Panc1 (cell line): ENCODE measurements at regions of chr5 and their contacts with region 1.

Region 1: GRCh38 chr5:149990518-149991376 is 9.7 kb downstream of the TIGD6 start:
- DNase-seq: peak; percentile 82
- ATAC-seq: peak; percentile 92
- H3K4me3 ChIP-seq: no peak overlapping the region
- H3K27ac ChIP-seq: peak overlapping the region; percentile 45; the same call in 1 of the 2 replicates
- H3K4me1 ChIP-seq: no peaks in the 10 kb centered on the region; the same call in 1 of the 2 replicates
- H3K27me3 ChIP-seq: no peaks in the 10 kb centered on the region
- CTCF ChIP-seq: peak; percentile 94

Region 2: GRCh38 chr5:149636851-149637246 is 353.9 kb before region 1 on chr5:
- CTCF ChIA-PET with region 1: no interaction called
- POLR2A ChIA-PET with region 1: interaction called, 3 read pairs
- in situ Hi-C with region 1: no loop called
- intact Hi-C with region 1: loop called (anchors 5 kb)
- DNase-seq: peak; percentile 52
- ATAC-seq: peak; percentile 90
- H3K4me3 ChIP-seq: no peak overlapping the region
- H3K27ac ChIP-seq: no peak overlapping the region
- H3K4me1 ChIP-seq: peaks cover 5% of the 10 kb centered on the region
- H3K27me3 ChIP-seq: no peaks in the 10 kb centered on the region
- CTCF ChIP-seq: peak; percentile 91

Region 3: GRCh38 chr5:149834246-149834855 is 156.4 kb before region 1 on chr5:
- CTCF ChIA-PET with region 1: interaction called, 52 read pairs
- POLR2A ChIA-PET with region 1: no interaction called
- in situ Hi-C with region 1: no loop called
- intact Hi-C with region 1: loop called (anchors 1 kb)
- DNase-seq: peak; percentile 69
- ATAC-seq: peak; percentile 77
- H3K4me3 ChIP-seq: no peak overlapping the region
- H3K27ac ChIP-seq: no peak overlapping the region
- H3K4me1 ChIP-seq: peaks cover 10% of the 10 kb centered on the region
- H3K27me3 ChIP-seq: no peaks in the 10 kb centered on the region
- CTCF ChIP-seq: peak; percentile 89

Region 4: DNA sequence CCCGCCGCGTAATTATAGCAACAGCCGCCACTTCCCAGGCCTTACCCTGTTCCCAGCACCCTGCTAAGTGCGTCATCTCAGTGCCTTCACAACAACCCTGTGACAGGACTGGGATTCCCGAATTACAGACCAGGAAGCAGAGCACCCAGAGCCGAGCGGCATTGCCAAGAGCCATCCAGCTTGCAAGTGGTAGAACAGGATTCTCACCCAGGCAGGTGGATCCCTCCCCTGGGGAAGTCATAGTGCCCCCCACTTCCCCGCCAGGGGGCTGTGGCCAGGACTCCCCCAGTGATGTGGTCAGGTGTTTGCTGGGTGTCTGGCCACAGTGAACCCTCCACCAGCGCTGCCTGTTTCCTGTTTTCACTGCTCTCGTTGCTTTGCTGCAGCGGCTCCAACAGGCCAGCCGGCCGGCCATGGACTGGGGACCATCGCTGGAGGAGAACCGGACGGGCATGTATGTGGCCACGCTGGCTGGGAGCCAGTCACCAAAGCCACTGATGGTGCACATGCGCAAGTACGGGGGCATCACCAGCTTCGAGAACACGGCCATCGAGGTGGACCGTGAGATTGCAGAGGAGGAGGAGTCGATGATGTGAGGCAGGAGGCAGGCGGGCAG is 218.4 kb after region 1 on chr5:
- CTCF ChIA-PET with region 1: no interaction called
- POLR2A ChIA-PET with region 1: no interaction called
- in situ Hi-C with region 1: no loop called
- intact Hi-C with region 1: no loop called
- DNase-seq: no peak
- ATAC-seq: no peak
- H3K4me3 ChIP-seq: no peak overlapping the region
- H3K27ac ChIP-seq: no peak overlapping the region
- H3K4me1 ChIP-seq: no peaks in the 10 kb centered on the region; the same call in 1 of the 2 replicates
- H3K27me3 ChIP-seq: no peaks in the 10 kb centered on the region
- CTCF ChIP-seq: no peak